Activated CD4-positive, alpha-beta T cell treated with anti-CD3 and anti-CD28 coated beads, Interleukin-2, amount 10 ng/mL, durations not matched to agents 24 days and 14 days (primary cell): ENCODE measurements at regions of chr1 and their contacts with region 1.

Region 1: DNA sequence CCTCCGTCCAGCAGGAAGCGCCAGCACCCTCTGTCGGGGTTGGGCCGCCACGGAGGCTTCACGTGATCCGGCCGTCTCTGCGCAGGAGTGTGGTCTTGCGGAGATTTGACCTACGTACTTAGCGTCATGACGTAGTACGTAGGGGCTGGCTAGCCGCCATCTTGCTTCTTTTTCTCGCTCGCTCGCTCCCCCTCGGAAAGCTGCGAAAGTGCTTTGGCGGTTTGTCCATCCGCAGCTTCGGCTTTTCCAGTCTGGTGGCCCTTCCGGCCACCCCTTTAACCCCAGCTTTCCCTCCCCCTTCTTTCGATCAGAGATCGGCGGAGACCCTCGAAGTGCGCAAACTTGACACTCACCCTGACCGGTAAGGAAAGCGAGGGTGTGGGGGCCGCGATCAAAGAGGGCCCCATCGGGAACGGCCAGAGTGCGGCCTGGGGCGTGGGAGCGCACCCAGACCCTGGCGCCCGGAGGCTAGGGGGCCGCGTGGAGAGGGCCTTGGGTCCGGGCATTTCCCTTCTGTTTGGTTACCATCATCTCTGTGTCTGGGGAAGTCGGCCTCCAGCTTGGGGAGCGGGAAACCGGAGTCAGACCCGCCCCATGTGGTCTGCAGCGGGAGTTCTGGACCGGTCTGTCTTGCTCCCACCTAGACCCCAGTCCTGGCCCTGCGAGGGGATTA is at the start of gene PRRC2C:
- DNase-seq: peak; percentile 98
- H3K4me3 Mint-ChIP-seq: peak within 1 kb of the TSS; percentile 94
- H3K27ac Mint-ChIP-seq: peak within 1 kb of the TSS; percentile 99
- H3K4me1 Mint-ChIP-seq: peaks cover 40% of the 10 kb centered on the region
- H3K27me3 Mint-ChIP-seq: no peaks in the 10 kb centered on the region
- total RNA-seq, gene PRRC2C: 278 TPM in 2 replicates

Region 2: GRCh38 chr1:171292799-171293198 is 192.7 kb before region 1 on chr1:
- intact Hi-C with region 1: no loop called
- DNase-seq: no peak
- H3K4me3 Mint-ChIP-seq: no peak overlapping the region
- H3K27ac Mint-ChIP-seq: no peak overlapping the region
- H3K4me1 Mint-ChIP-seq: no peaks in the 10 kb centered on the region
- H3K27me3 Mint-ChIP-seq: no peaks in the 10 kb centered on the region

Region 3: DNA sequence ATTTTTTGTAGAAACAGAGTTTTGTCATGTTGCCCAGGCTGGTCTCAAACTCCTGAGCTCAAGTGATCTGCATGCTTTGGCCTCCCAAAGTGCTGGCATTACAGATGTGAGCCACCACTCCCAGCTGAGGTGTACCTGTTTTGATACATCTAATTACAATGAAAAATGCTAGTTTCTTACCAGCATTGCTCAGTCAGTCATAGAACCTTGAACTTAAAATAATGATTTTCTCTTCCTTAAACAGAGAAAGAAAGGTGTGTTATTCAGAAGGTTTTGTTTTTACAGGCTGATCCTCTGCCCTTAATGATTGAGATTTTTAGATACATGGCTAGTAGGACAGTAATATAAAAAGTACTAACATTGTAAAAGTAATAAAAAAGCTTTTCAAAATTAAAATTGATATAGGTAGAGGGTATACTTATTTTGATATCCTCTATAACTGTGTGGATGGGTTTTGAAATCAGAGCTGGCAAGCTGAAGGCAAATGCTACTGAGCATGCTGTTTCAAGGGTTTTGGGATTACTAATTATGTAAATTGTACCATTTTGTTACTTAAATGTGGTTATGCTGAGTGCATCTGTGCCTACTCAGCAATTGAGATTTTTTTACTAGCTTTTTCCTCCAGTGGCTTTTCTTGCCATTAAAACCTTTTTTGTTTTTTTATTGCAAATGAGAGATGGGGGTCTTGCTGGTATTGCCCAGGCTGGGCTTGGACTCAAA is 16.0 kb after region 1 on chr1:
- intact Hi-C with region 1: loop called (anchors 2 kb)
- DNase-seq: no peak
- H3K4me3 Mint-ChIP-seq: no peak overlapping the region
- H3K27ac Mint-ChIP-seq: peak overlapping the region; percentile 53
- H3K4me1 Mint-ChIP-seq: peaks cover 64% of the 10 kb centered on the region
- H3K27me3 Mint-ChIP-seq: no peaks in the 10 kb centered on the region

Region 4: DNA sequence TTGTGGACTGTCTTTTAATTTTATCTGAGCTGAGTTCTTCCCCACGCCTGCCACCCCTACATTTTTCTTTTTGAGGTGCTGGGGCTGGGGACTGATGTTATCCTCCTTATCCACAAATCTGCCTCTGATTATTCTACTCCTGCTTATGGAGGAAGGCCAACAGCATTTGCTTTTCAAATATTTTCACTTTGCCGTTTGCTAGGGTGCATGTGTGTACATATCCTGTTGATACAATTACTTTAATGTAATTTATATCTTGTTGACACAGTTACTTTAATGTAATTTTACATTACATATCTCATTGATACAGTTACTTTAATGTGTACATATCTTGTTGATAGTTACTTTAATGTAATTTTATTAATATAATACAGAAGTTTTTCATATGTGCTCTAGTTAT is 36.1 kb after region 1 on chr1:
- intact Hi-C with region 1: loop called (anchors 5 kb)
- DNase-seq: no peak
- H3K4me3 Mint-ChIP-seq: no peak overlapping the region
- H3K27ac Mint-ChIP-seq: no peak overlapping the region
- H3K4me1 Mint-ChIP-seq: peaks cover 13% of the 10 kb centered on the region
- H3K27me3 Mint-ChIP-seq: no peaks in the 10 kb centered on the region

Region 5: GRCh38 chr1:171583581-171584201 is 98.2 kb after region 1 on chr1:
- intact Hi-C with region 1: loop called (anchors 2 kb)
- DNase-seq: no peak
- H3K4me3 Mint-ChIP-seq: no peak overlapping the region
- H3K27ac Mint-ChIP-seq: peak overlapping the region; percentile 45
- H3K4me1 Mint-ChIP-seq: peaks cover 28% of the 10 kb centered on the region
- H3K27me3 Mint-ChIP-seq: no peaks in the 10 kb centered on the region

Region 6: GRCh38 chr1:171781176-171781875 is 295.8 kb after region 1 on chr1 and contains the start of gene METTL13:
- intact Hi-C with region 1: loop called (anchors 1 kb)
- DNase-seq: peak; percentile 100
- H3K4me3 Mint-ChIP-seq: peak within 1 kb of the TSS; percentile 98
- H3K27ac Mint-ChIP-seq: peak within 1 kb of the TSS; percentile 94
- H3K4me1 Mint-ChIP-seq: peaks cover 45% of the 10 kb centered on the region
- H3K27me3 Mint-ChIP-seq: no peaks in the 10 kb centered on the region
- total RNA-seq, gene METTL13: 56.1 and 57.8 TPM in 2 replicates

Region 7: GRCh38 chr1:171850651-171851350 is 365.3 kb after region 1 on chr1:
- intact Hi-C with region 1: no loop called
- DNase-seq: no peak
- H3K4me3 Mint-ChIP-seq: no peak overlapping the region
- H3K27ac Mint-ChIP-seq: no peak overlapping the region
- H3K4me1 Mint-ChIP-seq: no peaks in the 10 kb centered on the region
- H3K27me3 Mint-ChIP-seq: peaks cover 31% of the 10 kb centered on the region